Activated naive CD4-positive, alpha-beta T cell treated with anti-CD3 and anti-CD28 coated beads for 36 hours (primary cell): ENCODE measurements at regions of chr6 and their contacts with region 1.

Region 1: DNA sequence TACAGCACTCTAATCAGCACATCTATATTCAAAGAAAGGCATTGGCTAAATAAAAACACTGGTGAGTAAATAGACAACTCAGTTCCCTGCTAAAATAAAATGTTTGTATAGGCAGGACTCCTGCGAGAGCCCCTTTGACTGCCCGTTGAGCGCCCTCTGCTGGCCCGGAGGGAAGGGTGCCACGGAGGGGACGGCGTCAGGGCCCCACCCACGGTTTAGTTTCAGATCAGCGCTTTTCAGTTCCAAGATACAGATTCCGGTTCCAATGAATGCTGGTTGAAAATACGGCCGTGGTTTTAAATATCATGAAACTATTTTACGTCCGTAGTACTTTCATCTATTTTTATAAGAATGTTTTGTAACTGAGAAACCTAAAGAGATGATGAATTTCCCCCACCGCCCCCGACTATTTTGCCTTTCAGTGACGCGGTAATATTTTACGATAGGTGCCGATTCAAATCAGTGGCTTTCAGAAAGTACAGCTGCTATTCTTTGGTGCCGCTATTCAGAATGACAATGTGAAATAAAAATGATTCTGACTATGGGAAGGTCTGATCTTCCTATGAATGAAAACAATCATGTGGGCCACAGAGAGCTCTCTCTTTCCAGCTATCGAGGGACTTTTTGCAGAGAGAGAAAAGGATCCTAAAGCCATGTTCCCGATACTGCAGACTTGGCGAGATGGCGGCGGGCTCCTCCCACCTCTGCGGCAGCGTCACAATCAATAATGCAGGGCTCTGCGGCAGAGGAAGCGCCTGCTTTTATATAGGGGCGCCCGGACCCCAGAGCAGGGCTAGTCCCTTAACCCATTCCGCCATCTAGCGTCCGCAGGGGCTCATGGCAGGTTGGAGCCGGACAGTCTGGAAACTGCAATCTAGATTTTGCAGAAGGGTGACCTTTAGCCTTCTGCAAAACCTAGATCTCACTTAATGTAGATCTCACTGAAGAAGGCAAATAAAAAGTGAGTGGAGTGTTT is 10.6 kb upstream of the CCN6 start:
- DNase-seq: peak; percentile 94
- H3K4me3 Mint-ChIP-seq: peak overlapping the region; percentile 91
- H3K27ac Mint-ChIP-seq: peak overlapping the region; percentile 98
- H3K4me1 Mint-ChIP-seq: peaks cover 39% of the 10 kb centered on the region
- H3K27me3 Mint-ChIP-seq: no peaks in the 10 kb centered on the region

Region 2: DNA sequence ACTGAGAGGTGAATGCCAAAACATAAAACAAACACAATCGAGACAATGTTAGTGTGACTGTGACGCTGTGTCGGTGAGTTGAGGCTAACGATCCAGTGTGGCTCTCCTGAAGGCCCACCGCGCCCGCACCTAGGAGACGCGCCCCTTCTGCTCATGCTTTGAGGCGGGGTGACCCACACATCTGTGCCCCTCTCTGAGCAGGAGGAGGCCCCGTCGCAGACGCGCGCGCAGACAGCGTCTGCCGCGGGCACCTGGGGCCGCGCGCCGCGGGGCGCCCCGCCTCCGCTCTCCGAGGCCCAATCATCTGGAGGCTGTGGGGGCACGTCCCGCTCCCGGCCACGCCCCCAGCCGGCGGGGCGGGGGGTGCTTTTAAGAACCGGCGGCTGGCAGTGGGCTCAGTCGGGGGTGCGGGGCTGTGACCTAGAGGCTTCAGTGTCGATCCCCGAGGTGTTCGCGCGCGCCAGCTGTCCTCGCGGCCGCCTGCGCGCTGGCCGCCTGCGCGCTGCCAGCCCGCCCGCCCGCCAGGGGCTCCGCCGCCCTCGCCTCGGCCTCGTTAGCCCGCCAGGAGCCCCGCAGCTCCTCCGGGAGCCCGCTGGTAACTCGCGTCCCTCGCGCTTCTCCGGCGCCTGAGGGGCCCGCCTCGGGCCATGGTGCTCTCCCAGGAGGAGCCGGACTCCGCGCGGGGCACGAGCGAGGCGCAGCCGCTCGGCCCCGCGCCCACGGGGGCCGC is 956.0 kb before region 1 on chr6 and contains the start of gene SLC16A10:
- CTCF ChIA-PET with region 1: no interaction called
- intact Hi-C with region 1: loop called (anchors 10 kb)
- DNase-seq: peak; percentile 74
- H3K4me3 Mint-ChIP-seq: peak within 1 kb of the TSS; percentile 89
- H3K27ac Mint-ChIP-seq: peak within 1 kb of the TSS; percentile 76
- H3K4me1 Mint-ChIP-seq: peaks cover 36% of the 10 kb centered on the region
- H3K27me3 Mint-ChIP-seq: no peaks in the 10 kb centered on the region
- total RNA-seq, gene SLC16A10: 6.6 to 8.1 TPM

Region 3: GRCh38 chr6:111307275-111307842 is 736.0 kb before region 1 on chr6:
- CTCF ChIA-PET with region 1: no interaction called
- intact Hi-C with region 1: no loop called
- DNase-seq: no peak
- H3K4me3 Mint-ChIP-seq: no peak overlapping the region
- H3K27ac Mint-ChIP-seq: no peak overlapping the region
- H3K4me1 Mint-ChIP-seq: peaks cover 3% of the 10 kb centered on the region
- H3K27me3 Mint-ChIP-seq: no peaks in the 10 kb centered on the region

Region 4: DNA sequence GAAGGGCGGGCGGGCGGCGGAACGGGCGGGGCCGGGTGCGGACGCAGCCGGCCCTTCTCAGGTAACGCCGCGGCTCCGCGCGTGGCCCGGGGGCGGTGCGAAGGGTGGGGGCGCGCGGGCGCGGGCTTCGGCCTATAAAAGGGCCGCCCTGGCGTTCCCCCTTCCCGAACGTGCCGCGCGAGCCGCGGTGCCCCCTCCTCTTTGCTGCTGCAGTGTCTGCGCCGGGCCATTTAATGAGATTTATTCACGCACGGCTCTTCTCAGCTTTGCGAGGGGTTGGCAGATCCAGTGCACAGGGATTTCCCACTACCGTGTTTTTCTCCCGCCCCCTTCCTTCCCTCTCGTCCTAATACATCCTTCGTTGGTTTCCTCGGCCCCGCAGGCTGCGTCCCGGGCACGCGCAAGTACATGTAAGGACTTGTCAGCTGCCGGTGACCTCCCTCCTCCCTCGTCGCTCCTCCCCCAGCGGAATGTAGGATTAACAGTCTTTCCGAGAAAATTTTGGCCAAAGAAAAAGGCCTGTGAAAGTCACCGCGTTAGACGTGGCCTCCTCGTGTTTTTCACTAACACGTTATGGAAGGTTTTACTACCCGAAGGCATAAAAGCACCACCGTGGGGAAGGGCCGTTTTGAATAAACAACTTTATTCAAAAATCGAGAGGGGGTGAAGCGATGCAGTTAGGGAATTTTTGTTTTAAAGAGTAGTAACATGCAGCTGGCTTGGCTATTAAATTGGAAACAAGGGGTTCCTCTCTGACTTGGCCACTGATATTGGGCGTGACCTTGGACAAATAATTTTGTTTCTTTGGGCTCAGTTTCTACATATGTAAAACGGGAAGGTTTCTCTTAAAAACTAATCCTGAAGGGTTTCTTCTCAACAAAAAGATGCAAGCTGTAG is 559.3 kb before region 1 on chr6:
- CTCF ChIA-PET with region 1: interaction called, 7 read pairs
- intact Hi-C with region 1: loop called (anchors 1 kb)
- DNase-seq: peak; percentile 92
- H3K4me3 Mint-ChIP-seq: peak overlapping the region; percentile 97
- H3K27ac Mint-ChIP-seq: peak overlapping the region; percentile 99
- H3K4me1 Mint-ChIP-seq: peaks cover 47% of the 10 kb centered on the region
- H3K27me3 Mint-ChIP-seq: no peaks in the 10 kb centered on the region

Region 5: DNA sequence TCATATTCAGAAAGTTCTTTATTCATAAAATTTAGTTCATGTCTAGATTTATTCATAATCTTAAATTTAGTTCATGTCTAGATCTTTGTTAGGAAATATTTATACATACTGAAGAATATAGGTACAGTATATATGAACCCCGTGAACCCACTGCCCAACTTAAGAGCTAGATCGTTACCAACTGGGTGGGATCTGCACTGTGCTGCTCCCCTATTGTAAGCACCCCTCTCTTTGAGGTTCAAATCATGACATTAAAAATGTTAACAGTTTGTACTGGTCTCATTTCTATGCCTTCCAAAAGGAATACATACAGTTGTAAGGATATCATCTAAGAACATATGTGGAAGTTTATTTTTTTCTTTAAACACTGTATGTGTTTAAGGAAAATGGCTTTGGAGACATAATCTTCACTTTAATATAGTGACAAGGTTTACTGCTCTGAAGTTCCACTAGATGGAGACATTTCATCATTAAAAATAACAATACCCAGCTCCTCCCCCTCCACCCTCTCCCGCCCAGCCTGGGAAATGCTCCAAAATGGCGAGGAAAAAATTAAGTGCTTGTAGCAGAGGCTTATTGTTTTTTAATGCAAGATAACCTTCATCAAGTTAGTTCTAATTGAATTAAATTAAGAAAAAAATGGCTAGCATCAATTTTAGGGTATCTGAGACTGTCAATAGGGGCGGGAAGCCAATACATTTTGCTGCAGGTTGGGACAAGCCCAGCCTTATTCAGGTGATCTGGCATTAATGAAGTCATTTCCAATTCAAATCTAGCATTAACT is 333.5 kb before region 1 on chr6:
- CTCF ChIA-PET with region 1: interaction called, 38 read pairs
- intact Hi-C with region 1: loop called (anchors 1 kb)
- DNase-seq: peak; percentile 73
- H3K4me3 Mint-ChIP-seq: no peak overlapping the region
- H3K27ac Mint-ChIP-seq: peak overlapping the region; percentile 82
- H3K4me1 Mint-ChIP-seq: peaks cover 53% of the 10 kb centered on the region
- H3K27me3 Mint-ChIP-seq: no peaks in the 10 kb centered on the region

Region 6: DNA sequence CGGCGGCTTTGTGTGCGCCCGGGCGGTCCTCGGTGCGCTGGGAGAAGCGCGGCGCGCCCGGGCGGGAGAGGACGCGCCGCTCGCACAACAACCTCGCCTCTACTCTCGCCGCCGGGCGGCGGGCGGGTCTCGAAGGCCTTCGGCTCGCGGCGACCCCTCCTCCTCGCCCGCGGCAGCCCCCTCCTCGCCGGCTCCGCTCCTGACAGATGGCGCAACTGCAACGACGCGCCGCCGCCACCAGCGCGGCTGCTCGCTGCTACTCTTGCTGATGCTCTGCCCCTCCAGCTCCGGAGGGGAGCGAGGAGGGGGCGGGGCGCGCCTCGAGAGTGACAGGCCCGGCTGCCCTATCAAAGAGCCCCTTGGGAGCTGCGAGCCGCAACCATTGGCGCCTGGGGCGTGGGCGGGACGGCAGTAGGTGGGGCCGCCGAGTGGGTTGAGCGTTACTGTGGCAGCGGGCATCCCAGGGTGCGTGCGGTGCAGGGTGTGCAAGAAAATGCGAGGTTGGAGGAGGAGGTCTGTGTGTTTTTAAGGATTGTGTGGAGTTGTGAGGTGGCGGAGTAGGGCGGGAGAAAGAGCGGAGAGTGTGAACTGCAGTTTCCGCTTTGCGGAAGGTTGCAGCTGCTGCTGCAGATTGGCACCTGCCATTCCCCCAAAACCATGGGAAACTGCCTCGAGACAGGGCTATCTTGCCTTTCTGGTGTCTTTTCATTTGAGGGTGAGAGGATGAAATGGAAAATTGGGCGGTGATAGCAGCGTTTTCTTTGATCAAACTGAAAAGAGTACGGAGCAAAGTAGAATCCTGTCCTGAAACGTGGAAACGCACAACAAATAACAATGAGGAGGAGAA is 169.9 kb before region 1 on chr6 and contains the start of gene FYN:
- CTCF ChIA-PET with region 1: no interaction called
- intact Hi-C with region 1: loop called (anchors 1 kb)
- DNase-seq: peak; percentile 99
- H3K4me3 Mint-ChIP-seq: peak within 1 kb of the TSS; percentile 96
- H3K27ac Mint-ChIP-seq: peak within 1 kb of the TSS; percentile 97
- H3K4me1 Mint-ChIP-seq: peaks cover 32% of the 10 kb centered on the region
- H3K27me3 Mint-ChIP-seq: no peaks in the 10 kb centered on the region
- total RNA-seq, gene FYN: 236 to 244 TPM

Region 7: GRCh38 chr6:112018619-112019416 is 24.5 kb before region 1 on chr6:
- CTCF ChIA-PET with region 1: interaction called, 310 read pairs
- intact Hi-C with region 1: loop called (anchors 1 kb)
- DNase-seq: no peak
- H3K4me3 Mint-ChIP-seq: no peak overlapping the region
- H3K27ac Mint-ChIP-seq: no peak overlapping the region
- H3K4me1 Mint-ChIP-seq: peaks cover 67% of the 10 kb centered on the region
- H3K27me3 Mint-ChIP-seq: no peaks in the 10 kb centered on the region